ENCODE measurements at regions of chr16 and their contacts with region 1.

Region 1: DNA sequence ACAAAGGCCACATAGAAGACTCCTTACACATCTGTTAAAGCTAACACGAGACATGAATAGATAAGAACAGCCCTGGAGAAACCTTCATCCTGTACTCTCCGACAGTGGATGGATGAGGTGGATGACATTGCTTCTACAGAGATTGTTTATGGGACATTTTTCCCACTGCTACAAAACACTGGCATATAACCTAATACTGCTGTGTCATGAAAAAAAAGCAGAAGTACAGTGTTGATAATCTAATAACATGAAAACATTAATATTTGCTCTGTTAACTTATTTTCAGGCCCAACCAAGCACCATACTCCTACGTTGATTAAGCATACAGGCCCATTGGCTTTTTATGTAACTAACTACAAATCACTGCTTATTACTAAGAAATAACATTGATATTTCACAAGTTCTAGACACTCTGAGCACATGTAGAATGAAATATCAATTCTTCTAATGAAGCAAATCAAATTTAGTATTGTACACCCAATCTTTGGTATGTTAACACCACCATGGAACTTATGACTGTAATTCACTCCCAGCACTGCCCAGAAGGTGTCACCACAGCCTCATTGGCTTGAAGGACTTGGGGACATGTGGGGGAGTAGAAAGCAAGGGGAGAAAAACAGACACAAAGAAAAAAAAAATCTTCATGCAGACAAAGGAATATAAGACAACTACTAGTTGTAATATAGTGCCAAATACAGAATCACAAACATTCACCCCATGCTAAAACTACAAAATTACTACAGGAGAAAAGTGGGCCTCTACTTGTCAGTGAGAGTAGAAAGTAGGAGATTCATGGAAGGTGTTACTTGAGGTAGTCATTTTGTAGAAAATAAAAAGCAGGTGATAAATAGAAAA is 330.0 kb upstream of the PMFBP1 start:
- DNase-seq: peak; percentile 36
- ATAC-seq: peak; percentile 59 to 67

Region 2: DNA sequence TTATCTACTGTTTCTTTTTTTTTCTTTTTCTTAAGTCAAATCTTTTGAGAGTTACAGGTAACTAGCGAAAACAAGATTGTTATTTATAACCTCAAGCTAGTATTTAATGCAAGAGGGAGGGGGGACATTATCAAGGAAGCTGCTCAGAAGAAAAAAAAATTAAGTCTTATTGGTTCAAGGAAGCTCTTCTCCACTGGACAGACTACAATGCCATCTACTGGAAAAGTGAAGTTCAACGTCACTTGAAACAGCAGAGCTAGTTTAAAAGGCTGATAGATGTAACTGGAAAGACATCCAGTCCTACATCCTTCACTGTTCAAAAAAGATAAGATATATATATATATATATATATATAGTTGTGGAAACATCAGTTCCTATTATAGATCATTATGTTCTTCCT is 1376.6 kb after region 1 on chr16:
- intact Hi-C with region 1: loop called in 1 of 2 experiments (anchors 2 kb)
- DNase-seq: no peak
- ATAC-seq: peak in 1 of 2 donors; percentile 30

Region 3: GRCh38 chr16:73956587-73957494 is 1454.9 kb after region 1 on chr16:
- intact Hi-C with region 1: loop called in 1 of 2 experiments (anchors 10 kb)
- DNase-seq: peak; percentile 33
- ATAC-seq: peak; percentile 41 to 50

Measured in left cardiac atrium (tissue), 4 donors.